ENCODE measurements at regions of chr5 and their contacts with region 1.

Region 1: GRCh38 chr5:77333451-77334123 is 123.1 kb downstream of the PDE8B start:
- DNase-seq: peak in 1 of 3 donors; percentile 30
- ATAC-seq: peak in 1 of 2 donors; percentile 27
- H3K4me3 ChIP-seq: no peak overlapping the region
- H3K27ac ChIP-seq: peak overlapping the region; percentile 83
- H3K4me1 ChIP-seq: peaks cover 13% of the 10 kb centered on the region
- H3K27me3 ChIP-seq: no peaks in the 10 kb centered on the region

Region 2: GRCh38 chr5:76754668-76755078 is 578.9 kb before region 1 on chr5:
- intact Hi-C with region 1: loop called in 1 of 4 experiments (anchors 5 kb)
- DNase-seq: no peak
- ATAC-seq: no peak
- H3K4me3 ChIP-seq: no peak overlapping the region
- H3K27ac ChIP-seq: no peak overlapping the region
- H3K4me1 ChIP-seq: no peaks in the 10 kb centered on the region
- H3K27me3 ChIP-seq: no peaks in the 10 kb centered on the region

Region 3: DNA sequence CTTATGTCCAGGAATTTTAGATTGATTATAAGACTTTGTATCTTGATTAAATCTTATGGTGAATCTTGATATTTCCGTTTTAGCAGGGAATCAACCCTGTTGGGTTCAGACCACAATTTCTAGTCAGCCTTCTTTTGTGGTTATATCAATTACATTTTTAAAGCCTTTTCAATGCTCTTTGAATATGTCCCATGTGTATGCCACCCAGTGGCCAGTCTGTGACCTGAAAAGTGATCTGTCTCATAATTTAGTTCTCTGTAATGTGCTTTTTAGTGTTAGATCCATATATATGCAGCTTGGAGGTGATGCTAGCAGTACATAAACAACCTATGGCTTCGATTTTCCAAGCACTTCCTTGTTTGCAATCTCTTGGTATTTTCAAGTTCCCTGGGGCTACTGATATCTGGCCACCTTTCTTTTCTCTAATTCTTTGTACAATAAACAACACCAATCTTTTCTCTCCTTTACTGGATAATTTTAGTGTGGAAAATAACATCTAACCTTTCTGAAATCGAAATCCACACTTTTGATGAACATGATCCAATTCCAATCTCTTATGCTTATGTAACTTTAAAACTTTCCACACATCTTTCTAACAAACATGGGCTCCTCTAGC is 94.4 kb before region 1 on chr5:
- intact Hi-C with region 1: no loop called
- DNase-seq: no peak
- ATAC-seq: no peak
- H3K4me3 ChIP-seq: no peak overlapping the region
- H3K27ac ChIP-seq: no peak overlapping the region
- H3K4me1 ChIP-seq: peaks cover 3% of the 10 kb centered on the region
- H3K27me3 ChIP-seq: no peaks in the 10 kb centered on the region